IMR-90 (cell line): ENCODE measurements at regions of chr14 and their contacts with region 1.

Region 1: GRCh38 chr14:23259426-23259825 is 21.7 kb downstream of the RNF212B start:
- DNase-seq: no peak
- ATAC-seq: no peak
- H3K4me3 ChIP-seq: no peak overlapping the region
- H3K27ac ChIP-seq: no peak overlapping the region
- H3K4me1 ChIP-seq: no peaks in the 10 kb centered on the region
- H3K27me3 ChIP-seq: peaks cover 14% of the 10 kb centered on the region
- CTCF ChIP-seq: no peak
- POLR2A ChIP-seq: no peak
- RAD21 ChIP-seq: no peak

Region 2: GRCh38 chr14:23057757-23058653 is 201.4 kb before region 1 on chr14:
- CTCF ChIA-PET with region 1: no interaction called
- POLR2A ChIA-PET with region 1: no interaction called
- dilution Hi-C with region 1: no loop called
- in situ Hi-C with region 1: no loop called
- intact Hi-C with region 1: no loop called
- DNase-seq: peak; percentile 76
- ATAC-seq: peak; percentile 55
- H3K4me3 ChIP-seq: peak overlapping the region; percentile 62
- H3K27ac ChIP-seq: peak overlapping the region; percentile 70
- H3K4me1 ChIP-seq: peaks cover 19% of the 10 kb centered on the region
- H3K27me3 ChIP-seq: no peaks in the 10 kb centered on the region
- CTCF ChIP-seq: peak; percentile 89
- POLR2A ChIP-seq: no peak; the same call in 1 of the 2 replicates
- RAD21 ChIP-seq: peak; percentile 82

Region 3: GRCh38 chr14:23379366-23380196 is 120.2 kb after region 1 on chr14:
- CTCF ChIA-PET with region 1: no interaction called
- POLR2A ChIA-PET with region 1: no interaction called
- dilution Hi-C with region 1: no loop called
- in situ Hi-C with region 1: no loop called
- intact Hi-C with region 1: loop called (anchors 2 kb)
- DNase-seq: peak; percentile 17
- ATAC-seq: peak; percentile 85
- H3K4me3 ChIP-seq: no peak overlapping the region
- H3K27ac ChIP-seq: no peak overlapping the region
- H3K4me1 ChIP-seq: no peaks in the 10 kb centered on the region
- H3K27me3 ChIP-seq: peaks cover 39% of the 10 kb centered on the region; the same call in 1 of the 2 replicates
- CTCF ChIP-seq: peak; percentile 93
- POLR2A ChIP-seq: no peak
- RAD21 ChIP-seq: peak; percentile 91